Mucosa of descending colon (tissue), 3 donors: ENCODE measurements at regions of chr17 and their contacts with region 1.

Region 1: DNA sequence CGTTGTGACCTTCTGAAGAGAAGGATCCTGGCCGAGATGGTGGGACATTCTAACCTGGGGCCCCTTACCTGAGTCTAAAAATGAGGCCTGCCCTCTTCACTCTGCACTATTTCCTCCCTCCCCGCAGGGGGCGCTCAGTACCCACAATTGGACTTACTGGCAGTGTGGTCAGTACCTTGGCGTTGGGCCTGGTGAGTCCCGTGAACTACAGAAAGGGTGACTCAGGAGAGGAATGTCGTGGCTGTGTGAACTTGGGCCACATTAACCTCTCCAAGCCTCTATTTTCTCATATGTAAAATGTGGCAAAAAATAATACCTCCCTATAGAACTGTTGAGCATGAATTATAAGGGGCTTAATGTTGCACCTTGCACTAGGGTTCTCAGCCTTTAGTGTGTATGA is 3.9 kb downstream of the RSAD1 start:
- DNase-seq: peak; percentile 91 to 94 (median 92)
- ATAC-seq: peak; percentile 72
- H3K4me3 ChIP-seq: no peak overlapping the region
- H3K4me1 ChIP-seq: peaks cover 19% of the 10 kb centered on the region
- CTCF ChIP-seq: peak; percentile 77

Region 2: DNA sequence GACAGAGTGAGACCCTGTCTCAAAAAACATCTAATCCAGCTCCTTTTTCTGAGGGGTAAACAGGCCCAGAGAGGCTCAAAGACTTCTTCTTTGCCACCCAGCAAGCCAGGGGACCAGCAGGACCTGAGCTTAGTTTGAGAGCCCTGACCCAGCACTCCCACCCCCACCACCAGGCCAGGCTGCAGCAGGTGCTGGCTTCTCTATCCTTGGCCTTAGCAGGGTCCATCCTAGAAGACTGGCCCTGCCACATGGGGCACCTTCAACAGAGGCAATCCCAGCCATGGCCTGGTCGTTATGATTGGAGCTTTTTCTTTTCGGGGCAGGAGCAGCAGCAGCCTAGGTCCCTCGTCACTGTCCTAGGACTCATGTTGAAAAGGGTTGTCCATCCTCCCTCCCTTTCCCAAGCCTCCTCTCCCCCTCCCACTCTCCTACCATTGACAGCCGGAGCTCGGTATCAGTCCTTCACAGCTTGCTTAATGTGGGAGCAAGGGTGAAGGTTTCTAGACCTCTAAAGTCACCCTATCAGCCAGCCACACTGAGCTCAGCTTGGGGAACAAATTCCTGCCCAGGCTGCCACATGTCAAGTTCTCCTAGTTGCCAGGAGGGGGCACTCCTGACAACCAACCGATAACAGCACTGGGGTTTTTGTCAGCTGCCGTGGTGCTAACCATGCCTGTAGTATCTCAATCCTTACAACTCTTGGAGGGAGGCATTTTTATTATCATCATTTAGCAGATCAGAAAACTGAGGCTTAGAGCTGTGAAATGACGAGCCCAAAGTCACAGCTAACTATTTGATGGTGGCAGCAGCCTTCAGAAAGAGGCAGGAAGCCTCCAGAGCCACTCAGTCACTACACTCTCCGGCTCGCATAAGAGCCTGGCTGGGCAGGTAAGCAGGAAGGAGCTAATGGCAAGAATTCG is 120.7 kb before region 1 on chr17:
- intact Hi-C with region 1: loop called in 1 of 2 experiments (anchors 10 kb)
- DNase-seq: peak in 2 of 3 donors; percentile 61 to 70
- ATAC-seq: peak; percentile 86
- H3K4me3 ChIP-seq: no peak overlapping the region
- H3K4me1 ChIP-seq: peaks cover 5% of the 10 kb centered on the region
- CTCF ChIP-seq: peak; percentile 79